Transverse colon (tissue), 4 donors: ENCODE measurements at regions of chr2 and their contacts with region 1.

Region 1: GRCh38 chr2:13289310-13289709 is 572.6 kb downstream of the TRIB2 start:
- DNase-seq: no peak
- H3K4me3 ChIP-seq: no peak overlapping the region
- H3K27ac ChIP-seq: no peak overlapping the region
- H3K4me1 ChIP-seq: no peaks in the 10 kb centered on the region
- H3K27me3 ChIP-seq: no peaks in the 10 kb centered on the region
- CTCF ChIP-seq: no peak
- EP300 ChIP-seq: no peak
- POLR2A ChIP-seq: no peak

Region 2: DNA sequence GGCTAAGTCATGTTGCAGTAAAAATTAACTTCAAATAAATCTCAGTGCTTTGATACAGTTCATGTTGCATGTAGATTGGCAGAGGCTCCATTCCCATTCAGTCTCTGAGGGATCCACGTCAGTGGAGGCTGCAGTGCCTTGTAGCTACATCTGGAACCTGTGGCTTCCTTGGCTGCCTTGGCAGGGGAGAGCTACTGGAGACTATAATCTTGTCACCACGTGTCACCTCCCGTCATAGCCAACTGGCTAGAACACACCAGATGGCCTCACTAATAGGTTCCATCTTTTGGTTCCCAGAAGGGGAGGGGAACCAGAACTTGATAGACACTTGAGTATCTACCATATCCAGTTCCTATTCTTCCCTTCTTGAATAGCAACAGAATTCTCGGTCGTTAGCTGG is 1851.7 kb before region 1 on chr2:
- in situ Hi-C with region 1: no loop called
- intact Hi-C with region 1: no loop called
- DNase-seq: no peak
- H3K4me3 ChIP-seq: no peak overlapping the region
- H3K27ac ChIP-seq: no peak overlapping the region
- H3K4me1 ChIP-seq: no peaks in the 10 kb centered on the region
- H3K27me3 ChIP-seq: no peaks in the 10 kb centered on the region
- CTCF ChIP-seq: no peak
- EP300 ChIP-seq: no peak
- POLR2A ChIP-seq: no peak

Region 3: DNA sequence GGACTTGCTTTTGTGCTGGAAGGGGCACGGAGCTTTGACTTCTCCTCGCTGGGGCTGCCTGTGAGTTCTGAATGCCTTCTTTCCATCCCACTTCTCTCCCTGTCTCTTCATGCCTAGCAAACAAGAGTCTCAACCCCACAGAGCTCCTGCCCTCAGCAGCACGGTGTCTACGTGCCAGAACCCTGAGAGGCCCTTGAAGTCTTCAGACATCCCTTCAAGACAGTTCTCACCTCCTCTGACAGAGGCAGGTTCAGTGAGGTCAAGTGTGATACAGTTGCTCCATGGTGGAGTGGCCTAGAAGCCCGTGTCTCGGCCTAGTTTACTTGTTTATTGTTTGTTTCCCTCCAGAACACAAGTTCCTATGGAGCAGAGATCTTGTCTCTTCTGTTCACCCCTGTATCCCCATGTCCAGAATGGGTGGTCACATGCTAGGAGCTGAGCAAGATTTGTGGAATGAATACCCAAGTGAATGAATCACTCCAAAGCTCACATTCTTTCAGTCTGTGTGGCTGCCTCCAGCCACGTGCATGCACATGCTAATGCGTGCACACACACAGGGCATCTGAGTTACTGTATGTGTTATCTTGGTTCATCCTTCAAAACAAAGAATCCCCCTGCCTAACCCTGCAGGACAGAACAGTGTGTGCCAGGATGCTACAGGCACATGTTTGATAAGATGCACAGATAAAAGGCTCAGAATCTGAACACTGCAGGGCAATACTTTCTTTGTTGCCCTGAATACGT is 1880.2 kb after region 1 on chr2:
- in situ Hi-C with region 1: no loop called
- intact Hi-C with region 1: loop called (anchors 5 kb)
- DNase-seq: no peak
- H3K4me3 ChIP-seq: no peak overlapping the region
- H3K27ac ChIP-seq: peak overlapping the region; percentile 4 to 56 (median 53)
- H3K4me1 ChIP-seq: peaks cover 0 to 5% (median 0%) of the 10 kb centered on the region in 4 donors
- H3K27me3 ChIP-seq: no peaks in the 10 kb centered on the region
- CTCF ChIP-seq: no peak
- EP300 ChIP-seq: no peak
- POLR2A ChIP-seq: no peak